Lower lobe of right lung (tissue), 2 donors: ENCODE measurements at regions of chr5 and their contacts with region 1.

Region 1: DNA sequence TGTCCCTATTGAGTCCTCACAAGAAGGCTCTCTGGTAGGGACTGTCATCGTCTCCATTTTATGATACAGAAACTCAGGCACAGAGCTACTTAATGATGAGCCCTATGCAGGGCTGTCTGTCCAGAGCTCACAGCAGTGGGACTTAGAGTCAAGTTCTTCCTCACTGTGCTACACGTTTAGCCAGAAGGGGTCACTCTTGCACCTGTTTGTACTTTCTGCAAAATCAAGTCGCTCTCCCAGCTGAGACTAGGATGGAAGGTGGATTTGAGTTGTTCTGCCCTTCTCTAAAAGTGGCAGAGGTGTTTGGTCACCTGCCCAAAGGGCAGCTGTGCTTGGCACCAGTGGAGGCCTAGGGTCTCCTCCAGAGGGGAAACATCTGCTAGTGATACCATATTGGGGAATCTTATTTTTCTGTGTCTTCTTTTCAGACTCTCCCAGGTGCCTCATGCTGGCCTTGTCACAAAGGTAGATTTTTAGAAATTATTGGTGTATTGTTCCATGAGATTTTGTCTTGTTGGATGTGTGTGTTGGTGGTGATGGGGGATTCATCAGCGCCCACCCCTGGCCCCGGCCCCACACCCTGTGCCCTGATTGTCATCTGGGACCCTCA is 104.2 kb downstream of the PPARGC1B start:
- DNase-seq: no peak
- ATAC-seq: peak; percentile 61 to 62
- H3K4me3 ChIP-seq: no peak overlapping the region
- H3K27ac ChIP-seq: no peak overlapping the region
- H3K4me1 ChIP-seq: peaks cover 4% of the 10 kb centered on the region
- H3K27me3 ChIP-seq: no peaks in the 10 kb centered on the region
- CTCF ChIP-seq: peak; percentile 70

Region 2: DNA sequence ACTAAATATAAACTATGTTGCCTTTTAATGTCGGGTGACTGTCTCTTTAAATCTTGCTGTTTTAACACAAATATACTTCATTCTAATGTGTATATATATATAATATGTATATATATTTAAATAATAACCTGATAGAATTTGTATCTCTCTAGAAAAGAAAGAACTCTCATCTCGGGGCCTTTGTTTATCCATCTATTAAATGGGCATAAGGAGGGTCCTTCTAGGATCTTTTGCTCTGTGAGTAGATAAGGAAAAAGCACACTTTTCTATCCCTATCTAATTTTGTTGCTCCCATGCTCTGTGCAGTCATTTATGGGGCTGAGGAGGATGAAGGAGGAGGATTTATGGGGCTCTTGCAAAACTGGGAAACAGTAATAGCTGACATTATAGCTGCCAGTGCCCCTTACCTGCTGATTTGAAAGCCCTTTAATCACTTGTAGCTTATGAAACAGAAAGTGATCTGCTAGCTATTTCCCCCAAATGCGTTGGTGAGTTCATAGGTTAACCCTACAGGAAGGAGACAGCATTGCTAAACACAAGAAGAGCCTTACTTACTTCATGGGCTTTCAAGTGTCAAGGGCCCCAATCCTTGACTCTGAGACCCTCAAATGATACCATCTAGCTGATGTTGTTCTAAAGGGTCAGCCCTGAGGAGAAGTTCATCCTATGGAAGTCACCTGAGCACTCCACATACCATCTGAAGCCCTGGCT is 110.1 kb before region 1 on chr5:
- intact Hi-C with region 1: no loop called
- DNase-seq: no peak
- ATAC-seq: no peak
- H3K4me3 ChIP-seq: no peak overlapping the region
- H3K27ac ChIP-seq: no peak overlapping the region
- H3K4me1 ChIP-seq: no peaks in the 10 kb centered on the region
- H3K27me3 ChIP-seq: no peaks in the 10 kb centered on the region
- CTCF ChIP-seq: no peak

Region 3: GRCh38 chr5:149988126-149988525 is 153.8 kb after region 1 on chr5:
- intact Hi-C with region 1: loop called (anchors 10 kb)
- DNase-seq: no peak
- ATAC-seq: no peak
- H3K4me3 ChIP-seq: no peak overlapping the region
- H3K27ac ChIP-seq: no peak overlapping the region
- H3K4me1 ChIP-seq: no peaks in the 10 kb centered on the region
- H3K27me3 ChIP-seq: no peaks in the 10 kb centered on the region
- CTCF ChIP-seq: no peak